Tibial artery (tissue), 4 donors: ENCODE measurements at regions of chr2 and their contacts with region 1.

Region 1: GRCh38 chr2:117308856-117309770 is 505.4 kb upstream of the DDX18 start:
- DNase-seq: no peak
- H3K4me3 ChIP-seq: no peak overlapping the region
- H3K27ac ChIP-seq: no peak overlapping the region
- H3K4me1 ChIP-seq: no peaks in the 10 kb centered on the region
- H3K27me3 ChIP-seq: no peaks in the 10 kb centered on the region
- CTCF ChIP-seq: no peak

Region 2: GRCh38 chr2:119064567-119064966 is 1755.5 kb after region 1 on chr2:
- intact Hi-C with region 1: loop called (anchors 5 kb)
- DNase-seq: no peak
- H3K4me3 ChIP-seq: no peak overlapping the region
- H3K27ac ChIP-seq: no peak overlapping the region
- H3K4me1 ChIP-seq: no peaks in the 10 kb centered on the region
- H3K27me3 ChIP-seq: no peaks in the 10 kb centered on the region
- CTCF ChIP-seq: no peak